ENCODE measurements at regions of chr6 and their contacts with region 1.

Region 1: DNA sequence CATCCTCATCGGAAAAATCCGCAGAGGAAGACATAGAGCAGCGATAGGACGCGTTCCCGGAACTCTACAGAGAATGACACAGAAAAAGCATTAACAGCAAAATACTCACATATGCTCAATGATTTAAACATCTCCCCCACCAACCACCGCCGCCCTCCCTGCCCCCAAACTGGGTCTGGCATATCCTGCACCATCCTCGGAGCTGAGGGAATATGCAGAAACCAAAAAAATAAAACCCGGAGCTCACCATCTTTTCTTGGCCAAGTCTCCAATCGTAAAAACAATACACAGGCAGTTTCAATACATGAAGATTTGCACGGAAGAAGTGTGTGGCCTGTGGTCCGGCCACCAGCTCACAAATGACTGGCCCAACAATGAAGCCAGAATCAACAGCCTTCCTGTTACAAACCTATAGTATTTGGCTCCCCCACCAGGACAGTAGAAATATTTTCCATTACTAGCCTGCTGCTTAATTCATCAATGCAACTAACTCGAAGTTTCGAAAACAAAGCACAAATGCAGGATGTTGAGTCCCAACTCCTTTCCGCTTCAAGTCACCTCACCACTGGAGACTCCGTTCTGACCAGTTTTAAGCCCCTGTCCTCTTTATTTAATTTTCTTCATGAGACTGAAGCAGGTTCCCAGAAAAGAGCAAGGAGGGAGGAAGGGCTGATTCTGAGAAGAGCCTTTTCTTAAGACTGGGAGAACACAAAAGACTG is 103.2 kb upstream of the BEND6 start:
- DNase-seq: peak; percentile 91
- ATAC-seq: peak; percentile 93
- H3K4me3 ChIP-seq: peak overlapping the region; percentile 42 to 63
- H3K27ac ChIP-seq: peak overlapping the region; percentile 82
- H3K4me1 ChIP-seq: peaks cover 44% of the 10 kb centered on the region
- H3K27me3 ChIP-seq: no peaks in the 10 kb centered on the region
- CTCF ChIP-seq: peak; percentile 89

Region 2: DNA sequence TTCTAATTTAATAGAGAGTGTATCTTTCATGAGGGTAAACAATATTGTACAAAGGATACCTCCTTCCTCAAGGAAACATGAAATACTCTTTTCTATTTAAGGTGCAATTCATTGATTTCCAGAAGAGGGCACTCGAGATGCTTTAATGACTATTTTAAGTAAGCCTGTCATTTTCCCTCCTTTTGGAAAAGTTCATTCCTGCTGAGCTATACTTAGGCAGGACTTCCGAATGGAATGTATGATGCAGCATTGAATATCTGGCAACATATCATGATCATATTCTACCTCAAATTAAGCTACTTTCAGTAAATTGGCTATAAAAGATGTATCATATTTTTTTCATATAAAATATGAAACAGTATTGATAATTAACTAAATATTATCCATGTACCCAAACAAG is 214.1 kb before region 1 on chr6:
- CTCF ChIA-PET with region 1: interaction called, 4 read pairs
- POLR2A ChIA-PET with region 1: no interaction called
- in situ Hi-C with region 1: no loop called
- intact Hi-C with region 1: loop called (anchors 5 kb)
- DNase-seq: peak; percentile 75
- ATAC-seq: peak; percentile 86
- H3K4me3 ChIP-seq: no peak overlapping the region
- H3K27ac ChIP-seq: no peak overlapping the region
- H3K4me1 ChIP-seq: no peaks in the 10 kb centered on the region; the same call in 1 of the 2 replicates
- H3K27me3 ChIP-seq: no peaks in the 10 kb centered on the region
- CTCF ChIP-seq: peak; percentile 79; the same call in 1 of the 2 replicates

Region 3: DNA sequence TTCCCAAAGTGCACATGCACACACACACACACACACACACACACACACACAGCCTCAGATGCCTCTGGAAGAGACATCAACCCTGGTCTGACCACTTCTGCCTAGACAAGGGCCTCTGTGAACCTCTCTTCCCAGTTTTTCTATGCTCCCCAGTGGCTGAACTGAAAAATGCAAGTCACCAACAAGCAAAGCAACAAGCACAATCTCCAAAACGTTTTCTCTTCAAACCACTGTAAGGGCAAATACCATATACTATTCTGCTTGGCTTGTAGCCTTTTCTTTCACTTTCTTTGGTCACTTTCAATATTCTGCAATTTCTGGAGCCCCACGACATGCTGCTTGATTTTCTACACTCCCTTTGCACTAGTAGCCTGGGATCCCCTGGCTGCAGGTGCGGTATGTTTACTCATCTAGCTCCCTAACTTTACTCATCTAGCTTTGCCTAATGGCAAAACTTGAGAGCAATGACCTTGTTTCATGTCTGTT is 87.6 kb before region 1 on chr6:
- CTCF ChIA-PET with region 1: interaction called, 13 read pairs
- POLR2A ChIA-PET with region 1: no interaction called
- in situ Hi-C with region 1: no loop called
- intact Hi-C with region 1: no loop called
- DNase-seq: no peak
- ATAC-seq: peak; percentile 81
- H3K4me3 ChIP-seq: no peak overlapping the region
- H3K27ac ChIP-seq: peak overlapping the region; percentile 26; the same call in 1 of the 2 replicates
- H3K4me1 ChIP-seq: peaks cover 43% of the 10 kb centered on the region
- H3K27me3 ChIP-seq: no peaks in the 10 kb centered on the region
- CTCF ChIP-seq: peak; percentile 79

Region 4: GRCh38 chr6:56864171-56864616 is 12.5 kb after region 1 on chr6:
- CTCF ChIA-PET with region 1: interaction called, 5 read pairs
- POLR2A ChIA-PET with region 1: interaction called, 11 read pairs
- in situ Hi-C with region 1: no loop called
- intact Hi-C with region 1: no loop called
- DNase-seq: no peak
- ATAC-seq: no peak
- H3K4me3 ChIP-seq: no peak overlapping the region
- H3K27ac ChIP-seq: peak overlapping the region; percentile 85
- H3K4me1 ChIP-seq: peaks cover 71% of the 10 kb centered on the region
- H3K27me3 ChIP-seq: no peaks in the 10 kb centered on the region
- CTCF ChIP-seq: no peak

Region 5: GRCh38 chr6:57127763-57128162 is 276.1 kb after region 1 on chr6:
- CTCF ChIA-PET with region 1: no interaction called
- POLR2A ChIA-PET with region 1: no interaction called
- in situ Hi-C with region 1: no loop called
- intact Hi-C with region 1: no loop called
- DNase-seq: no peak
- ATAC-seq: peak; percentile 62; the same call in 1 of the 2 replicates
- H3K4me3 ChIP-seq: no peak overlapping the region
- H3K27ac ChIP-seq: no peak overlapping the region
- H3K4me1 ChIP-seq: peaks cover 7% of the 10 kb centered on the region; the same call in 1 of the 2 replicates
- H3K27me3 ChIP-seq: no peaks in the 10 kb centered on the region
- CTCF ChIP-seq: no peak